B cell (primary cell): ENCODE measurements at regions of chr6 and their contacts with region 1.

Region 1: GRCh38 chr6:37691904-37692806 is 5.5 kb downstream of the MDGA1 start:
- DNase-seq: peak; percentile 84
- ATAC-seq: peak; percentile 82
- H3K4me3 ChIP-seq: no peak overlapping the region
- H3K4me3 Mint-ChIP-seq: no peak overlapping the region
- H3K27ac ChIP-seq: no peak overlapping the region
- H3K27ac Mint-ChIP-seq: no peak overlapping the region
- H3K4me1 ChIP-seq: peaks cover 21 to 23% of the 10 kb centered on the region in 2 donors
- H3K4me1 Mint-ChIP-seq: peaks cover 26% of the 10 kb centered on the region
- H3K27me3 ChIP-seq: peaks cover 0 to 34% (median 14%) of the 10 kb centered on the region in 4 experiments
- H3K27me3 Mint-ChIP-seq: peaks cover 26% of the 10 kb centered on the region
- CTCF ChIP-seq: peak; percentile 95

Region 2: GRCh38 chr6:37324131-37325033 is 367.8 kb before region 1 on chr6:
- CTCF ChIA-PET with region 1: interaction called, 48 read pairs
- POLR2A ChIA-PET with region 1: no interaction called
- intact Hi-C with region 1: loop called (anchors 1 kb)
- DNase-seq: no peak
- ATAC-seq: no peak
- H3K4me3 ChIP-seq: no peak overlapping the region
- H3K4me3 Mint-ChIP-seq: no peak overlapping the region
- H3K27ac ChIP-seq: no peak overlapping the region
- H3K27ac Mint-ChIP-seq: no peak overlapping the region
- H3K4me1 ChIP-seq: no peaks in the 10 kb centered on the region
- H3K4me1 Mint-ChIP-seq: peaks cover 2% of the 10 kb centered on the region
- H3K27me3 ChIP-seq: no peaks in the 10 kb centered on the region
- H3K27me3 Mint-ChIP-seq: no peaks in the 10 kb centered on the region
- CTCF ChIP-seq: no peak

Region 3: GRCh38 chr6:37483917-37484785 is 208.0 kb before region 1 on chr6:
- CTCF ChIA-PET with region 1: interaction called, 14 read pairs
- POLR2A ChIA-PET with region 1: no interaction called
- intact Hi-C with region 1: loop called (anchors 1 kb)
- DNase-seq: peak; percentile 81
- ATAC-seq: peak; percentile 91
- H3K4me3 ChIP-seq: no peak overlapping the region
- H3K4me3 Mint-ChIP-seq: no peak overlapping the region
- H3K27ac ChIP-seq: peak overlapping the region in 1 of 2 donors; percentile 19
- H3K27ac Mint-ChIP-seq: no peak overlapping the region
- H3K4me1 ChIP-seq: peaks cover 0 to 14% of the 10 kb centered on the region in 2 donors
- H3K4me1 Mint-ChIP-seq: peaks cover 9% of the 10 kb centered on the region
- H3K27me3 ChIP-seq: no peaks in the 10 kb centered on the region
- H3K27me3 Mint-ChIP-seq: no peaks in the 10 kb centered on the region
- CTCF ChIP-seq: peak; percentile 86

Region 4: GRCh38 chr6:37582306-37582705 is 109.8 kb before region 1 on chr6:
- CTCF ChIA-PET with region 1: interaction called, 5 read pairs
- POLR2A ChIA-PET with region 1: no interaction called
- intact Hi-C with region 1: loop called (anchors 5 kb)
- DNase-seq: no peak
- ATAC-seq: no peak
- H3K4me3 ChIP-seq: no peak overlapping the region
- H3K4me3 Mint-ChIP-seq: no peak overlapping the region
- H3K27ac ChIP-seq: no peak overlapping the region
- H3K27ac Mint-ChIP-seq: no peak overlapping the region
- H3K4me1 ChIP-seq: peaks cover 15 to 16% of the 10 kb centered on the region in 2 donors
- H3K4me1 Mint-ChIP-seq: peaks cover 18% of the 10 kb centered on the region
- H3K27me3 ChIP-seq: peaks cover 0 to 3% (median 0%) of the 10 kb centered on the region in 4 experiments
- H3K27me3 Mint-ChIP-seq: peaks cover 4% of the 10 kb centered on the region
- CTCF ChIP-seq: no peak

Region 5: GRCh38 chr6:37705239-37706051 is 13.3 kb after region 1 on chr6:
- CTCF ChIA-PET with region 1: interaction called, 13 read pairs
- POLR2A ChIA-PET with region 1: no interaction called
- intact Hi-C with region 1: loop called (anchors 1 kb)
- DNase-seq: peak; percentile 87
- ATAC-seq: peak; percentile 88
- H3K4me3 ChIP-seq: peak overlapping the region; percentile 3 to 69 (median 53)
- H3K4me3 Mint-ChIP-seq: peak overlapping the region; percentile 91
- H3K27ac ChIP-seq: peak overlapping the region; percentile 39 to 65
- H3K27ac Mint-ChIP-seq: peak overlapping the region; percentile 86
- H3K4me1 ChIP-seq: peaks cover 5 to 22% of the 10 kb centered on the region in 2 donors
- H3K4me1 Mint-ChIP-seq: peaks cover 26% of the 10 kb centered on the region
- H3K27me3 ChIP-seq: peaks cover 0 to 4% (median 0%) of the 10 kb centered on the region in 4 experiments
- H3K27me3 Mint-ChIP-seq: no peaks in the 10 kb centered on the region
- CTCF ChIP-seq: peak; percentile 83

Region 6: GRCh38 chr6:37745748-37746147 is 53.6 kb after region 1 on chr6:
- CTCF ChIA-PET with region 1: no interaction called
- POLR2A ChIA-PET with region 1: no interaction called
- intact Hi-C with region 1: no loop called
- DNase-seq: no peak
- ATAC-seq: no peak
- H3K4me3 ChIP-seq: no peak overlapping the region
- H3K4me3 Mint-ChIP-seq: no peak overlapping the region
- H3K27ac ChIP-seq: no peak overlapping the region
- H3K27ac Mint-ChIP-seq: no peak overlapping the region
- H3K4me1 ChIP-seq: no peaks in the 10 kb centered on the region
- H3K4me1 Mint-ChIP-seq: no peaks in the 10 kb centered on the region
- H3K27me3 ChIP-seq: peaks cover 0 to 8% (median 3%) of the 10 kb centered on the region in 4 experiments
- H3K27me3 Mint-ChIP-seq: peaks cover 15% of the 10 kb centered on the region
- CTCF ChIP-seq: no peak